ENCODE measurements at regions of chr12 and their contacts with region 1.

Region 1: DNA sequence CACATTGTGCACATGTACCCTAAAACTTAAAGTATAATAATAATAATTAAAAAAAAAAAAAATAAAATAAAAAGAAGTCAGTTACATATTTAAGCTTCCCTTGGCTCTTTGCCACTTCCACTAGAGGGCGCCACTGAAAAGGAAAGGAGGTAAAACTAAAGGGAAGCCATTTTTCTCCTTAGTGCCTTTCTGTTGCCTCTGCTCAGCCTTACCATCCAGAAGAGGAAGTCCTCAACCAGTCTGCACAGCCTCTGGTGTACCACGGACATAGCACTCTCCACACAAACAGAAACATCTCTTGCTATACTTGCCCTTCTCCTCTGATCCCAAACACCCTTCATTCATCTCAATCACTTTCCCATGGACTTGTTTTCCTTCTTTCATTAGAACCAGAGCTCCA is 169.0 kb upstream of the EEA1 start:
- DNase-seq: peak; percentile 87 to 91 (median 90)
- H3K4me3 ChIP-seq: peak overlapping the region in 1 of 3 experiments; percentile 2
- H3K4me3 Mint-ChIP-seq: peak overlapping the region; percentile 53 to 81
- H3K27ac ChIP-seq: peak overlapping the region in 1 of 2 donors; percentile 50
- H3K27ac Mint-ChIP-seq: peak overlapping the region in 6 of 7 donors; percentile 8 to 70 (median 40)
- H3K4me1 ChIP-seq: peaks cover 6 to 9% of the 10 kb centered on the region in 2 donors
- H3K4me1 Mint-ChIP-seq: peaks cover 13% of the 10 kb centered on the region
- H3K27me3 ChIP-seq: no peaks in the 10 kb centered on the region
- H3K27me3 Mint-ChIP-seq: no peaks in the 10 kb centered on the region
- CTCF ChIP-seq: peak; percentile 87

Region 2: GRCh38 chr12:93050026-93050747 is 47.9 kb before region 1 on chr12:
- intact Hi-C with region 1: no loop called
- DNase-seq: no peak
- H3K4me3 ChIP-seq: no peak overlapping the region
- H3K4me3 Mint-ChIP-seq: no peak overlapping the region
- H3K27ac ChIP-seq: no peak overlapping the region
- H3K27ac Mint-ChIP-seq: no peak overlapping the region
- H3K4me1 ChIP-seq: no peaks in the 10 kb centered on the region
- H3K4me1 Mint-ChIP-seq: no peaks in the 10 kb centered on the region
- H3K27me3 ChIP-seq: no peaks in the 10 kb centered on the region
- H3K27me3 Mint-ChIP-seq: peaks cover 0 to 6% (median 0%) of the 10 kb centered on the region in 3 donors
- CTCF ChIP-seq: no peak

Region 3: DNA sequence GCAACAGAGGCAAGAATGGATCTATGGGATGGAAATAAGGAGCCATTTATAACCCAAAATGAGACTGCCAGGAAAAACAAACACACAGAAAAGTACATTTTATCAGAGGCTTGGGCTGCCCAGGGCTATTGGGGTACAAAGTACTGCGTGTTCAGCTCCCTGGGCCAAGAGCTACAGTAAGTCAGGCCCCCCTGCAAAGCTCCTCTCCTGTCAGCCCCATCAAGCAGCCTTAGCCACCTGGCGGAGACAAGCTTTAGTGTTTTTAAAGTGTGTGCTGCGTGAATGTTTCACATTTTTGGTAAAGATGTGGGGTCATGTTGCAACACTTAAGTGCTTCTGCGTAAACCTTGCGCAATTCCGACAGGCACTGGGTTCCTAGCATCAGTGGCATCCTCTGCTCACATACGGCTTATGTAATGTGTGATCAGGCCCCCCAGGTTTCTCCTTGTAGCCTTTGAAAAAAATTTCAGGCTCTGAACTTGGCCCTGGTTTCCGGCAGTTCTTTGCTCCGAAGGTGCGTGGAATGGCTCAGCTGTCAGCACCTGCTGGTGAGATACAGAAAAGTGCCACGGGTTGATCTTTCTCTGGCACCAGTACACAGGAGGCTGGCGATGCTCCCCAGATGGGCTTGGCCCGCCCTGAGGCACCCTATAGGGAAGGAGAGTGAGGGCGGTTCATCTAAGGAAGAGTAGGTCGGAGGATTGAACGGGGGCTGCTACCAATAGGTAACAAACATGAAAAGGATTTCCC is 29.7 kb after region 1 on chr12:
- intact Hi-C with region 1: loop called in 1 of 2 experiments (anchors 5 kb)
- DNase-seq: peak; percentile 83 to 90 (median 87)
- H3K4me3 ChIP-seq: no peak overlapping the region
- H3K4me3 Mint-ChIP-seq: peak overlapping the region in 1 of 2 donors; percentile 21
- H3K27ac ChIP-seq: peak overlapping the region; percentile 16 to 39
- H3K27ac Mint-ChIP-seq: peak overlapping the region; percentile 23 to 86 (median 67)
- H3K4me1 ChIP-seq: peaks cover 44 to 45% of the 10 kb centered on the region in 2 donors
- H3K4me1 Mint-ChIP-seq: peaks cover 38% of the 10 kb centered on the region
- H3K27me3 ChIP-seq: no peaks in the 10 kb centered on the region
- H3K27me3 Mint-ChIP-seq: peaks cover 0 to 2% (median 1%) of the 10 kb centered on the region in 3 donors
- CTCF ChIP-seq: peak; percentile 70

Region 4: GRCh38 chr12:93183940-93184671 is 86.0 kb after region 1 on chr12:
- intact Hi-C with region 1: loop called in 1 of 2 experiments (anchors 10 kb)
- DNase-seq: peak; percentile 83 to 90 (median 85)
- H3K4me3 ChIP-seq: peak overlapping the region in 1 of 3 experiments; percentile 50
- H3K4me3 Mint-ChIP-seq: peak overlapping the region in 1 of 2 donors; percentile 77
- H3K27ac ChIP-seq: peak overlapping the region; percentile 87 to 91
- H3K27ac Mint-ChIP-seq: peak overlapping the region; percentile 92 to 97 (median 93)
- H3K4me1 ChIP-seq: peaks cover 37 to 41% of the 10 kb centered on the region in 2 donors
- H3K4me1 Mint-ChIP-seq: peaks cover 45% of the 10 kb centered on the region
- H3K27me3 ChIP-seq: no peaks in the 10 kb centered on the region
- H3K27me3 Mint-ChIP-seq: peaks cover 0 to 1% (median 0%) of the 10 kb centered on the region in 3 donors
- CTCF ChIP-seq: no peak

Region 5: GRCh38 chr12:93378373-93379325 is 280.6 kb after region 1 on chr12:
- intact Hi-C with region 1: loop called in 1 of 2 experiments (anchors 10 kb)
- DNase-seq: peak; percentile 63 to 74 (median 67)
- H3K4me3 ChIP-seq: peak overlapping the region; percentile 73 to 94 (median 92)
- H3K4me3 Mint-ChIP-seq: peak overlapping the region; percentile 97 to 100
- H3K27ac ChIP-seq: peak overlapping the region; percentile 92 to 94
- H3K27ac Mint-ChIP-seq: peak overlapping the region; percentile 93 to 98 (median 96)
- H3K4me1 ChIP-seq: peaks cover 65 to 69% of the 10 kb centered on the region in 2 donors
- H3K4me1 Mint-ChIP-seq: peaks cover 65% of the 10 kb centered on the region
- H3K27me3 ChIP-seq: no peaks in the 10 kb centered on the region
- H3K27me3 Mint-ChIP-seq: no peaks in the 10 kb centered on the region
- CTCF ChIP-seq: no peak